ENCODE measurements at regions of chr15 and their contacts with region 1.

Region 1: DNA sequence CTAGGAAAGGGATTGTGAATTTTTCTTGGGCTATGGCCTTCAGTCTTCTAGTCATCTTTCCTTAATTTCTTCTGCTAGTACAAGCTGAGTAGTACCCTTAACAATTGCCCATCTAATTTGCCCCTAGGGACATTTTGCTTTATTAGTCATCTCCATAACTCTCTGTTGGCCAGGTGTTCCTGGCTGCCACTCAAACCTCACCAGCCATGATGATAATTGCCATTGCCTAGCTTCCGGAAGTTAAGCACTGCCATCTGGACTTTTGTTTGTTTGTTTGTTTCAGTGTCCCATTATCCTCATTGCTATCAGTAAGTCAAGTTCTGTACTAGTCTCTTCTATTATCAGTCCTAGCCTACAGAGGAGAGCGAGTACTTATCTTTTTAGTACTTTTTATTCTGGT is 36.6 kb upstream of the UBL7 start:
- DNase-seq: peak; percentile 87
- H3K4me3 ChIP-seq: no peak overlapping the region
- H3K27ac ChIP-seq: no peak overlapping the region
- H3K4me1 ChIP-seq: peaks cover 13% of the 10 kb centered on the region
- H3K27me3 ChIP-seq: no peaks in the 10 kb centered on the region
- CTCF ChIP-seq: no peak

Region 2: GRCh38 chr15:74444106-74445062 is 53.2 kb before region 1 on chr15:
- CTCF ChIA-PET with region 1: no interaction called
- dilution Hi-C with region 1: loop called (anchors 5 kb)
- in situ Hi-C with region 1: no loop called
- intact Hi-C with region 1: no loop called
- DNase-seq: no peak
- H3K4me3 ChIP-seq: no peak overlapping the region
- H3K27ac ChIP-seq: no peak overlapping the region
- H3K4me1 ChIP-seq: no peaks in the 10 kb centered on the region
- H3K27me3 ChIP-seq: no peaks in the 10 kb centered on the region
- CTCF ChIP-seq: no peak

Region 3: GRCh38 chr15:74482661-74483060 is 14.9 kb before region 1 on chr15:
- CTCF ChIA-PET with region 1: no interaction called
- dilution Hi-C with region 1: no loop called
- in situ Hi-C with region 1: no loop called
- intact Hi-C with region 1: no loop called
- DNase-seq: no peak
- H3K4me3 ChIP-seq: no peak overlapping the region
- H3K27ac ChIP-seq: no peak overlapping the region
- H3K4me1 ChIP-seq: no peaks in the 10 kb centered on the region
- H3K27me3 ChIP-seq: no peaks in the 10 kb centered on the region
- CTCF ChIP-seq: no peak

Region 4: DNA sequence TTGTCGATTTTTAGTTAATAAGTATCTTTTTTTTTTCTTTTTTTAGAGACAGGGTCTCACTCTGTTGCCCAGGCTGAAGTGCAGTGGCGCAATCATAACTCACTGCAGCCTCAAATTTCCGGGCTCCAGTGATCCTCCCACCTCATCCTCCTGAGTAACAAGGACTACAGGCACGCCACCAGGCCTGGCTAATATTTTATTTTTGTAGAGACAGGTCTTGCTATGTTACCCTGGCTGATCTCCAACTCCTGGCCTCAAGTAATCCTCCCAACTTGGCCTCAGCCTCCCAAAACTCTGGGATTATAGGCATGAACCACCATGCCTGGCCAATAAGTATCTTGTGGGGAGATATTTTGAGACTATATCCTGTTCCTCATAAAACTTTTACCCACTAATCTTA is 14.0 kb after region 1 on chr15:
- CTCF ChIA-PET with region 1: interaction called, 21 read pairs
- dilution Hi-C with region 1: no loop called
- in situ Hi-C with region 1: no loop called
- intact Hi-C with region 1: no loop called
- DNase-seq: no peak
- H3K4me3 ChIP-seq: no peak overlapping the region
- H3K27ac ChIP-seq: no peak overlapping the region
- H3K4me1 ChIP-seq: no peaks in the 10 kb centered on the region
- H3K27me3 ChIP-seq: no peaks in the 10 kb centered on the region
- CTCF ChIP-seq: no peak

Region 5: GRCh38 chr15:74540761-74541493 is 43.3 kb after region 1 on chr15 and contains the start of gene ARID3B:
- CTCF ChIA-PET with region 1: no interaction called
- dilution Hi-C with region 1: loop called (anchors 5 kb)
- in situ Hi-C with region 1: no loop called
- intact Hi-C with region 1: loop called (anchors 2 kb)
- DNase-seq: peak; percentile 96
- H3K4me3 ChIP-seq: peak within 1 kb of the TSS; percentile 86 to 95 (median 95)
- H3K27ac ChIP-seq: peak within 1 kb of the TSS; percentile 90
- H3K4me1 ChIP-seq: peaks cover 39% of the 10 kb centered on the region
- H3K27me3 ChIP-seq: no peaks in the 10 kb centered on the region
- CTCF ChIP-seq: no peak
- total RNA-seq, gene ARID3B: 7.0 to 12.8 TPM

Region 6: GRCh38 chr15:74674119-74674518 is 176.5 kb after region 1 on chr15:
- CTCF ChIA-PET with region 1: no interaction called
- dilution Hi-C with region 1: no loop called
- in situ Hi-C with region 1: no loop called
- intact Hi-C with region 1: no loop called
- DNase-seq: no peak
- H3K4me3 ChIP-seq: no peak overlapping the region
- H3K27ac ChIP-seq: no peak overlapping the region
- H3K4me1 ChIP-seq: no peaks in the 10 kb centered on the region
- H3K27me3 ChIP-seq: no peaks in the 10 kb centered on the region
- CTCF ChIP-seq: no peak

Region 7: DNA sequence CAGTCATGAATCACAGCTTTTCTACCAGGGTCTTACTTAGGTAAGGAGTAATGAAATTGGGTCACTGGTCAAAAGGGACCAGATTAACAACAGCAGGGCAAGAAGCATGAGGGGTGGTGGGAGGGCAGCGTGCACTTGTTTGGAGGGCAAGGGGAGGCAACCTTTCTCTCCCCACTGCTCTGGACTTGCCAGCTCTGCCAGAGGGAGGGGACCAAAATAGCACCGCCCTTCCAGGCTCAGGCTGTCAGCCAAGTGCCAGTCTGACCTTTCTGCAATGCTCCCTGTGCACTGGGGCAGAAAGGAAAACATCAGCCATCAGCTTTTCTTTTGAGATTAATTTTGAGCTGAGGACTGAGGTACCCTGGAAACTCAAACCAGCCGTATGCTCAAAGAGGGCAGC is 349.8 kb after region 1 on chr15:
- CTCF ChIA-PET with region 1: no interaction called
- dilution Hi-C with region 1: no loop called
- in situ Hi-C with region 1: no loop called
- intact Hi-C with region 1: no loop called
- DNase-seq: no peak
- H3K4me3 ChIP-seq: no peak overlapping the region
- H3K27ac ChIP-seq: no peak overlapping the region
- H3K4me1 ChIP-seq: peaks cover 8% of the 10 kb centered on the region
- H3K27me3 ChIP-seq: no peaks in the 10 kb centered on the region
- CTCF ChIP-seq: no peak